Left colon (tissue), 2 donors: ENCODE measurements at regions of chr12 and their contacts with region 1.

Region 1: GRCh38 chr12:4276524-4277204 is 3.1 kb downstream of the CCND2 start:
- DNase-seq: peak; percentile 90
- ATAC-seq: peak; percentile 34

Region 2: GRCh38 chr12:3872800-3873636 is 403.6 kb before region 1 on chr12 and contains the start of gene PARP11:
- intact Hi-C with region 1: loop called in 1 of 2 experiments (anchors 10 kb)
- DNase-seq: peak; percentile 98 to 100
- ATAC-seq: peak; percentile 97
- total RNA-seq, gene PARP11: 7.4 to 7.5 TPM

Region 3: GRCh38 chr12:3990501-3991280 is 286.0 kb before region 1 on chr12:
- intact Hi-C with region 1: loop called in 1 of 2 experiments (anchors 5 kb)
- DNase-seq: no peak
- ATAC-seq: no peak

Region 4: GRCh38 chr12:4030929-4031702 is 245.5 kb before region 1 on chr12:
- intact Hi-C with region 1: loop called in 1 of 2 experiments (anchors 10 kb)
- DNase-seq: peak; percentile 87 to 91
- ATAC-seq: peak; percentile 96

Region 5: DNA sequence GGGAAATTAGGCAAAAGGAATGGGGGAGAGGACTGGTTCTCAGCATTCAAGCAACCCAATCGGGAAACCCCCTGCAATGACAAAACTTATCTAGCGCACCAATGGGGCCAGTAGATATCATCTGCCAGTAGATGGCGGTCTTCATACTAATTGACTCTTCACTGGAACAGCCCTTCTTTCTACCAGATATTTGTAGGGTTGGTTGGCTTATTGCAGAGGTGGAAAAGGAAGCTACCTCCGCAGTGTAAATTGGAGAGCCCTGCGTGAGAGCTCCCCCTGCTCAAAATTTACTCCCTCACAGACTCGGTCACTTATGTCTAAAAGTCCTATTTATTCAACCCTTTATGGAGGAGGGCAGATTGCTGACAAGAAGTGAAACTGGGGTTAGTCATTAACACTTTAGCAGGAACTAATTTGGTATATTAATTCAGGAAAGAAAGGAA is 169.2 kb before region 1 on chr12:
- intact Hi-C with region 1: loop called in 1 of 2 experiments (anchors 5 kb)
- DNase-seq: peak; percentile 36 to 53
- ATAC-seq: peak; percentile 94

Region 6: GRCh38 chr12:4118017-4118510 is 158.6 kb before region 1 on chr12:
- intact Hi-C with region 1: loop called in 1 of 2 experiments (anchors 5 kb)
- DNase-seq: peak; percentile 85 to 87
- ATAC-seq: peak; percentile 87